ENCODE measurements at regions of chr14 and their contacts with region 1.

Region 1: GRCh38 chr14:61321385-61322010 is at the start of gene PRKCH:
- DNase-seq: peak; percentile 42
- ATAC-seq: peak; percentile 82
- H3K4me3 Mint-ChIP-seq: peak within 1 kb of the TSS; percentile 87
- H3K27ac Mint-ChIP-seq: peak within 1 kb of the TSS; percentile 72
- H3K4me1 Mint-ChIP-seq: peaks cover 17% of the 10 kb centered on the region
- H3K27me3 Mint-ChIP-seq: peaks cover 6% of the 10 kb centered on the region
- CTCF ChIP-seq: no peak
- total RNA-seq, gene PRKCH: 4.6 and 4.7 TPM in 2 replicates

Region 2: DNA sequence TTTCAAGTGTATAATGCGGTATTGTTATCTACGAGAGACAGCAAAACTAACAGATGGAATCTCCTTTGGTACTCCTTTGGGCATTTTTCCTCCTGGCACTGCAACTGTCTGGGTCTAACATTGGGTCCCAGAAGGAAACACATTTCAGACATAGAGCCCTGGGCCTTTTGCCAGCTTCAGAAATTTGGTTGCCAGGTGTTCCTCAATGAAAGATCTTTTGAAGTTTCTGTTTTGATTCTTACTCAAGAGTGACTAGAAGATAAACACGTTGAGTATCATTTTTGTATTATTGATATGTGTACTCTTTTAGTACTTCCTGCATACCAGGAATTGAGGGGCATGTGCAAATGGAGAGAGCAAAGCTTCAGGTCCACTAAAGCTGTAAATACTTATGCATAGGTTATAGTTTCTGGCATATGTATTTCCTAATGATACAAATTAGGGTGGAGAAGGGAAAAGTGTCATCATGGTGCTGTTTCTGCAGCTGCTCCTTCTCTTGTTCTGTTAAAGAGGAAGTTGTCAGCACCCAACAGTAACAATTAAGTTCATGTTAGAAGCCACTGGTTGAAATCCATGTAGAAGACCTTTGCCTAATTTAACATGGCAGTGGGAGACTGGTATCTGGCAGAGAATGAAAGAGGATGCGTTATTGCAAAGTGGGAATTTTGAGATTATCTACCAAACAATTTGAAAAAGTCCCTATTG is 286.9 kb before region 1 on chr14:
- CTCF ChIA-PET with region 1: no interaction called
- POLR2A ChIA-PET with region 1: no interaction called
- intact Hi-C with region 1: no loop called
- DNase-seq: no peak
- ATAC-seq: no peak
- H3K4me3 Mint-ChIP-seq: no peak overlapping the region
- H3K27ac Mint-ChIP-seq: peak overlapping the region; percentile 67
- H3K4me1 Mint-ChIP-seq: peaks cover 19% of the 10 kb centered on the region
- H3K27me3 Mint-ChIP-seq: no peaks in the 10 kb centered on the region
- CTCF ChIP-seq: no peak

Region 3: GRCh38 chr14:61296719-61297502 is 24.6 kb before region 1 on chr14:
- CTCF ChIA-PET with region 1: no interaction called
- POLR2A ChIA-PET with region 1: no interaction called
- intact Hi-C with region 1: no loop called
- DNase-seq: no peak
- ATAC-seq: no peak
- H3K4me3 Mint-ChIP-seq: no peak overlapping the region
- H3K27ac Mint-ChIP-seq: no peak overlapping the region
- H3K4me1 Mint-ChIP-seq: no peaks in the 10 kb centered on the region
- H3K27me3 Mint-ChIP-seq: no peaks in the 10 kb centered on the region
- CTCF ChIP-seq: no peak

Region 4: DNA sequence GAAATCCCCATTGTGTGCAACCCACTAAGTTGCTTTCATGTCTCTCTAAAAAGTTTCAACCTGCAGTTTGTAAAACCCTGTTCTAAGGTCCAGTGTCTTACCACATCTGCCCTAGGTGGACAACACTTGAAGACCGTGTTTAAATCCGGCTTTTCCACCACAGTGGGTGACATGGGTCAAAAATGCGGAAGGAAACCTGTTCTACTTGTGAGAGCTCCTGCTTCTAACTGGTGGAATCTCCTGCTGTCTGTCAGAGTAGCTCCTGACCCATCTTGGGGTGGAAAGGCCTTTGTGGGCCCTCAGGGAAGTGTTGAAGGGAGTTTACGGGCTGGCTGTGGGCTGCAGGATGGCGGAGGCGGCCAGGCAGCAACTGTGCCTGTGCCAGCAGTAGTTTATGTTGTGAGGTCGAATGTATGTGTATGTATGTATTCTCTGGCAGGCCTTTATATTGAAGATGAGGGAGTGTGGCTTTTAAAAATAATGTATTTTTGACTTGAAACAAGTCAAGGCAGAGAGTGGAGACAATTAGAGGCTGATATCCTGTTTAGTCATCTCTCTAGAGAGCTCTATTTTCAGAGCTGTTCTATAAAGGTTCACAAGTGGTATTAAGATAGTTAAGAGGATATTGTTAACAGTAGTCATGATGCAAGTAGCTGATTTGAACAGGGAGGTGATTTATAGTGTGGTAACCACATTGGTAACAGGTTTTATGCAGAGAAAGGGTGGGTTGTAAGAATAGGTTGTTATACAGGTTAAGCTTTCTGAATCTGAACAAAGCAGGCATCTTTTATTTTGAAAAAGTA is 66.9 kb after region 1 on chr14:
- CTCF ChIA-PET with region 1: no interaction called
- POLR2A ChIA-PET with region 1: interaction called, 4 read pairs
- intact Hi-C with region 1: loop called (anchors 2 kb)
- DNase-seq: no peak
- ATAC-seq: peak; percentile 71
- H3K4me3 Mint-ChIP-seq: peak overlapping the region; percentile 32
- H3K27ac Mint-ChIP-seq: peak overlapping the region; percentile 64
- H3K4me1 Mint-ChIP-seq: peaks cover 16% of the 10 kb centered on the region
- H3K27me3 Mint-ChIP-seq: peaks cover 6% of the 10 kb centered on the region
- CTCF ChIP-seq: no peak

Region 5: GRCh38 chr14:61438860-61439684 is 117.6 kb after region 1 on chr14:
- CTCF ChIA-PET with region 1: no interaction called
- POLR2A ChIA-PET with region 1: no interaction called
- intact Hi-C with region 1: loop called (anchors 5 kb)
- DNase-seq: no peak
- ATAC-seq: peak; percentile 10
- H3K4me3 Mint-ChIP-seq: no peak overlapping the region
- H3K27ac Mint-ChIP-seq: no peak overlapping the region
- H3K4me1 Mint-ChIP-seq: peaks cover 23% of the 10 kb centered on the region
- H3K27me3 Mint-ChIP-seq: peaks cover 7% of the 10 kb centered on the region
- CTCF ChIP-seq: no peak

Region 6: DNA sequence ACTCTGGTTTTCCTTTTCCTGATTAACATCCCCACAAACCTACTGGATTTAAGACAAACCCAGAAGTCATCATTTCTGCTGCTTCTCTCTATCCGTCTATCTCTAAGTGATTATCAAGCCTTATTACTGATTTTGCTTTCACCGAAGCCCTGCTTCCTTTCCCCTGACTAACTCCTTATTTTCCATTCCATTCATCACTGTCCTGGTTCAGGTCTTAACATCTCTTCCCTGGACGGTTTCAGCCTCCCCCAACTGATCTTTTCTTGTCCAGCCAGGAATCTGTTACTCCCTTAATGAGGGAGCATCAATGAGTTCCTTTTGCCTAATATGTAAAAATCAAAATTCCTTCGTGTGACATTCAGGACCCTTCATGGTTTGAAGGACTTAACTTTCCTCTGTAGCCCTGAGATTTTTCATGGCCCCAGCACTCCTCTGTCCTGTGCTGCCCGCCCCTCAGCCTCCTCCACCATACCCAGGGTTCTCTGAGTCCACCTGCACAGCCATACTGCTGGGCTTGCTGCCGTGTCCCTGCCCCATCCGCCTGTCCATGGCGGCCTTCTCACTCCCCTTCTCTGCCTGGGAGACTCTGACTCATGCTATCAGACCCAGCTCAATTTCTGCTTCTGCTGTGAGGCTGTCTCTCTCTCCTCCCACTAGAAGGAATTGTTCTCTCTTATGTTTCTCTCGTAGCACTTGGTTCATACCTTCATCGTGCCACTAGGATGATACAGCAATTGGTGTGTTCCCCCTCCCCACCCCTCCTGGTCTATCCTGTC is 206.0 kb after region 1 on chr14:
- CTCF ChIA-PET with region 1: no interaction called
- POLR2A ChIA-PET with region 1: no interaction called
- intact Hi-C with region 1: no loop called
- DNase-seq: no peak
- ATAC-seq: no peak
- H3K4me3 Mint-ChIP-seq: no peak overlapping the region
- H3K27ac Mint-ChIP-seq: no peak overlapping the region
- H3K4me1 Mint-ChIP-seq: peaks cover 5% of the 10 kb centered on the region
- H3K27me3 Mint-ChIP-seq: no peaks in the 10 kb centered on the region
- CTCF ChIP-seq: no peak

Region 7: GRCh38 chr14:61730756-61731373 is 409.4 kb after region 1 on chr14:
- CTCF ChIA-PET with region 1: no interaction called
- POLR2A ChIA-PET with region 1: no interaction called
- intact Hi-C with region 1: no loop called
- DNase-seq: no peak
- ATAC-seq: no peak
- H3K4me3 Mint-ChIP-seq: no peak overlapping the region
- H3K27ac Mint-ChIP-seq: peak overlapping the region; percentile 57
- H3K4me1 Mint-ChIP-seq: peaks cover 41% of the 10 kb centered on the region
- H3K27me3 Mint-ChIP-seq: no peaks in the 10 kb centered on the region
- CTCF ChIP-seq: no peak

Measured in activated B cell treated with CpG ODN at 0.5 μM for 24 hours (primary cell).